ENCODE measurements at regions of chr12 and their contacts with region 1.

Region 1: GRCh38 chr12:109228664-109229063 is 80.4 kb downstream of the FOXN4 start:
- DNase-seq: no peak
- ATAC-seq: no peak
- H3K4me3 ChIP-seq: no peak overlapping the region
- H3K27ac ChIP-seq: no peak overlapping the region
- H3K4me1 ChIP-seq: no peaks in the 10 kb centered on the region
- H3K27me3 ChIP-seq: no peaks in the 10 kb centered on the region
- CTCF ChIP-seq: no peak
- POLR2A ChIP-seq: no peak

Region 2: GRCh38 chr12:109189291-109189690 is 39.4 kb before region 1 on chr12:
- intact Hi-C with region 1: loop called in 2 of 10 experiments (anchors 5 to 10 kb)
- DNase-seq: no peak
- ATAC-seq: no peak
- H3K4me3 ChIP-seq: no peak overlapping the region
- H3K27ac ChIP-seq: no peak overlapping the region
- H3K4me1 ChIP-seq: no peaks in the 10 kb centered on the region
- H3K27me3 ChIP-seq: no peaks in the 10 kb centered on the region
- CTCF ChIP-seq: no peak
- POLR2A ChIP-seq: no peak

Measured in heart left ventricle (tissue), 16 donors.